CD8-positive, alpha-beta memory T cell (primary cell): ENCODE measurements at regions of chr1 and their contacts with region 1.

Region 1: GRCh38 chr1:44807262-44808062 is at the start of gene DYNLT4:
- DNase-seq: peak; percentile 84 to 95 (median 90)
- H3K4me3 ChIP-seq: peak within 1 kb of the TSS; percentile 58
- H3K4me3 Mint-ChIP-seq: peak within 1 kb of the TSS; percentile 67 to 90 (median 84)
- H3K27ac ChIP-seq: peak within 1 kb of the TSS; percentile 96
- H3K27ac Mint-ChIP-seq: peak within 1 kb of the TSS; percentile 97 to 100 (median 100)
- H3K4me1 ChIP-seq: peaks cover 77% of the 10 kb centered on the region
- H3K4me1 Mint-ChIP-seq: peaks cover 65 to 80% (median 71%) of the 10 kb centered on the region in 3 donors
- H3K27me3 ChIP-seq: no peaks in the 10 kb centered on the region
- H3K27me3 Mint-ChIP-seq: peaks cover 0 to 6% of the 10 kb centered on the region in 2 donors
- total RNA-seq, gene DYNLT4: 0.28 to 0.31 TPM

Region 2: DNA sequence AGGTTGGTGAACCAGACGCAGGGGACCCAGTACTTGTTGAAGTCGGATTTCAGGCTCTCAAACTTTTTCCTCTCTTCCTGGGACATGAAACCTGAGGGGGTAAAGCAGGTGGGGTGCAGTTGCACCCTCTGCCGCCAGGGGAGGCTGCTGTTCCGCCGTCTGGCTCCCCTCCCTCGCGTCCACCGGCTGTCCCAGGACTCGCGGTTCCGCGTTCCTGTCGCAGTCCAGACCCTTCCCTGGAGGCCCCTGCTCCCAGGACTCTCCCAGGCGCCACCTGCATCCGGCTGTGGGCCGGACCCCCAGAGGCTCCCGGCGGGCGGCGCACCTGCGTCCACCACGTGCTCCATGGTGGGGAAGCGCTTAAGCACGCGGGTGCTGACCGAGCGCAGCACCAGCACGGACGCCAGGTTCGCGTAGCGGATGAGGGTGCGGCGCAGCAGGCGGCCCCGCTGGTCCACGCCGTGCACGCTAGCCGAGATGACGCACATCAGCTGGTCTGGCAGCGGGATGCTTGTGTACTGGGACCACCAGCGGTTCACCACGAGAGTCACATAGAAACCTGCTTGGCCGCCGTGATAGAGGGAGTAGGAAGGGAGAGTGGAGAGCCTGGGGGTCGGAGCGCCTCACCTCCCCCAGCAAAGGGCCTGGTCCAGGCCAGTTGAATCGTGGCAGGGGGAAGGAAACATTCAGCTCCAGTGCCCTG is 21.2 kb before region 1 on chr1:
- CTCF ChIA-PET with region 1: interaction called, 13 read pairs
- POLR2A ChIA-PET with region 1: interaction called, 3 read pairs
- DNase-seq: peak; percentile 71 to 83 (median 77)
- H3K4me3 ChIP-seq: peak overlapping the region; percentile 74
- H3K4me3 Mint-ChIP-seq: peak overlapping the region; percentile 76 to 93 (median 81)
- H3K27ac ChIP-seq: no peak overlapping the region
- H3K27ac Mint-ChIP-seq: peak overlapping the region; percentile 77 to 98 (median 87)
- H3K4me1 ChIP-seq: peaks cover 29% of the 10 kb centered on the region
- H3K4me1 Mint-ChIP-seq: peaks cover 27 to 36% (median 30%) of the 10 kb centered on the region in 3 donors
- H3K27me3 ChIP-seq: no peaks in the 10 kb centered on the region
- H3K27me3 Mint-ChIP-seq: no peaks in the 10 kb centered on the region

Region 3: GRCh38 chr1:44835738-44836675 is 28.5 kb after region 1 on chr1:
- CTCF ChIA-PET with region 1: interaction called, 15 read pairs
- POLR2A ChIA-PET with region 1: interaction called, 12 read pairs
- DNase-seq: peak; percentile 67 to 88 (median 72)
- H3K4me3 ChIP-seq: no peak overlapping the region
- H3K4me3 Mint-ChIP-seq: peak overlapping the region in 5 of 7 donors; percentile 0 to 49 (median 38)
- H3K27ac ChIP-seq: no peak overlapping the region
- H3K27ac Mint-ChIP-seq: peak overlapping the region in 4 of 8 donors; percentile 6 to 81 (median 37)
- H3K4me1 ChIP-seq: no peaks in the 10 kb centered on the region
- H3K4me1 Mint-ChIP-seq: peaks cover 5 to 8% (median 7%) of the 10 kb centered on the region in 3 donors
- H3K27me3 ChIP-seq: no peaks in the 10 kb centered on the region
- H3K27me3 Mint-ChIP-seq: peaks cover 6 to 13% of the 10 kb centered on the region in 2 donors